CD4-positive, alpha-beta T cell (primary cell): ENCODE measurements at regions of chr5 and their contacts with region 1.

Region 1: DNA sequence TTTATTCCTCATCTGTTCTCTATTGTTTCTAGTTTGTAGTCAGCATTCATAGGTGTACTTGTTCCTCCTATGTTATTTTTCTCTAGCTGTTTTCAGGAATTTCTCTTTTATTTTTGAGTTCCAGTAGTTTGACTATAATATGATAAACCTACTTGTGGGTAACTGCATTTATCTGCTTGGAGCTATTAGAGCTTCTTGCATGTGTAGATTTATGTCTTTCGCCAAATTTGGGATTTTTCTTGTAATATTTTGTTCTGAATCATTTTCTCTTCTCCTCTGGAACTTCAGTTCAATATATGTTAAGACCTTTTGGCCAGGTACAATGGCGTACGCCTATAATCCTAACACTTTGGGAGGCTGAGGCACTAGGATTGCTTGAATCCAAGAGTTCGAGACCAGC is 37.4 kb downstream of the JMY start:
- DNase-seq: no peak
- ATAC-seq: no peak
- H3K4me3 ChIP-seq: no peak overlapping the region
- H3K4me3 Mint-ChIP-seq: no peak overlapping the region
- H3K27ac ChIP-seq: no peak overlapping the region
- H3K27ac Mint-ChIP-seq: no peak overlapping the region
- H3K4me1 ChIP-seq: peaks cover 3% of the 10 kb centered on the region
- H3K4me1 Mint-ChIP-seq: peaks cover 58% of the 10 kb centered on the region
- H3K27me3 ChIP-seq: no peaks in the 10 kb centered on the region
- H3K27me3 Mint-ChIP-seq: no peaks in the 10 kb centered on the region
- CTCF ChIP-seq: no peak

Region 2: GRCh38 chr5:79241535-79241979 is 31.8 kb before region 1 on chr5:
- CTCF ChIA-PET with region 1: no interaction called
- POLR2A ChIA-PET with region 1: interaction called, 4 read pairs
- intact Hi-C with region 1: loop called in 1 of 2 experiments (anchors 5 kb)
- DNase-seq: no peak
- ATAC-seq: no peak
- H3K4me3 ChIP-seq: no peak overlapping the region
- H3K4me3 Mint-ChIP-seq: peak overlapping the region; percentile 71
- H3K27ac ChIP-seq: no peak overlapping the region
- H3K27ac Mint-ChIP-seq: no peak overlapping the region
- H3K4me1 ChIP-seq: peaks cover 34% of the 10 kb centered on the region
- H3K4me1 Mint-ChIP-seq: peaks cover 80% of the 10 kb centered on the region
- H3K27me3 ChIP-seq: no peaks in the 10 kb centered on the region
- H3K27me3 Mint-ChIP-seq: no peaks in the 10 kb centered on the region
- CTCF ChIP-seq: no peak

Region 3: DNA sequence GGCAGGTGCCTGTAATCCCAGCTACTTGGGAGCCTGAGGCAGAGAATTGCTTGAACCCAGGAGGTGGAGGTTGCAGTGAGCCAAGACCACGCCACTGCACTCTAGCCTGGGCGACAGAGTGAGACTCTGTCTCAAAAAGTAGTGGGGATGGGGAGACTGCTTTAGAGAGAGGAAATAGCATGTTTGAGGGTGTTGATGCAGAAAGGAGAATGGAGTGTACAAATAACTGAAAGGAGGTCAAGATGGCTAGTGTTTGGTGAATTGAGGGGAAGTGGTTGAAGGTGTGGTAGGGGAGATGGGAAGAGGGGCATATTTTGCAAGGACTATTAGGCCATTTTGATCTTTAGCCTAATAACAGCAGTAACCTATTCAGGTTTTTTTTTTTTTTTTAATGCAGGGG is 357.1 kb after region 1 on chr5:
- CTCF ChIA-PET with region 1: no interaction called
- POLR2A ChIA-PET with region 1: no interaction called
- intact Hi-C with region 1: no loop called
- DNase-seq: peak in 2 of 14 experiments; percentile 14 to 71
- ATAC-seq: peak; percentile 21
- H3K4me3 ChIP-seq: no peak overlapping the region
- H3K4me3 Mint-ChIP-seq: no peak overlapping the region
- H3K27ac ChIP-seq: no peak overlapping the region
- H3K27ac Mint-ChIP-seq: no peak overlapping the region
- H3K4me1 ChIP-seq: peaks cover 11% of the 10 kb centered on the region
- H3K4me1 Mint-ChIP-seq: peaks cover 42% of the 10 kb centered on the region
- H3K27me3 ChIP-seq: no peaks in the 10 kb centered on the region
- H3K27me3 Mint-ChIP-seq: no peaks in the 10 kb centered on the region
- CTCF ChIP-seq: no peak